ENCODE measurements at regions of chr13 and their contacts with region 1.

Region 1: GRCh38 chr13:85828149-85828548 is 28.9 kb upstream of the SLITRK6 start:
- DNase-seq: no peak
- ATAC-seq: peak in 2 of 4 donors; percentile 36 to 47
- H3K4me3 ChIP-seq: no peak overlapping the region
- H3K27ac ChIP-seq: no peak overlapping the region
- H3K4me1 ChIP-seq: no peaks in the 10 kb centered on the region
- H3K27me3 ChIP-seq: peaks cover 0 to 6% (median 0%) of the 10 kb centered on the region in 4 donors
- CTCF ChIP-seq: peak; percentile 26 to 58 (median 40)

Region 2: DNA sequence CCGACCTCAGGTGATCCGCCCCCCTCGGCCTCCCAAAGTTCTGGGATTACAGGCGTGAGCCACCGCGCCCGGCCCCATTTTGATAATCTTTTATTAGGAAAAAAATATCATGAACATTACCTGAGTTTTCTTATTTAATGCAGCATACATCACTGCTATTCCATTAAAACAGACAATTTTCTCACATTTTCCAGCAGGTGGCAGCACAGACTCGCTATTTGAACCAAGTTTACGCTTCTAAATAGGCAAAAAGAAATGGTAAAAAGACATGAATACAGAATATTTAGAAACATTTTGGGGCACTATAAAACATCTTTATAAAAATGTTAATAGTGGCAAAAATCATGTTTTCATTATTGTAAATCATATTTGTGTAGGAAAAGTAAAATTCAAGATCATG is 932.0 kb before region 1 on chr13:
- intact Hi-C with region 1: loop called in 1 of 3 experiments (anchors 10 kb)
- DNase-seq: peak in 1 of 6 donors; percentile 38
- ATAC-seq: peak in 3 of 4 donors; percentile 46 to 69 (median 48)
- H3K4me3 ChIP-seq: no peak overlapping the region
- H3K27ac ChIP-seq: no peak overlapping the region
- H3K4me1 ChIP-seq: no peaks in the 10 kb centered on the region
- H3K27me3 ChIP-seq: no peaks in the 10 kb centered on the region
- CTCF ChIP-seq: peak; percentile 11 to 53 (median 26)

Region 3: DNA sequence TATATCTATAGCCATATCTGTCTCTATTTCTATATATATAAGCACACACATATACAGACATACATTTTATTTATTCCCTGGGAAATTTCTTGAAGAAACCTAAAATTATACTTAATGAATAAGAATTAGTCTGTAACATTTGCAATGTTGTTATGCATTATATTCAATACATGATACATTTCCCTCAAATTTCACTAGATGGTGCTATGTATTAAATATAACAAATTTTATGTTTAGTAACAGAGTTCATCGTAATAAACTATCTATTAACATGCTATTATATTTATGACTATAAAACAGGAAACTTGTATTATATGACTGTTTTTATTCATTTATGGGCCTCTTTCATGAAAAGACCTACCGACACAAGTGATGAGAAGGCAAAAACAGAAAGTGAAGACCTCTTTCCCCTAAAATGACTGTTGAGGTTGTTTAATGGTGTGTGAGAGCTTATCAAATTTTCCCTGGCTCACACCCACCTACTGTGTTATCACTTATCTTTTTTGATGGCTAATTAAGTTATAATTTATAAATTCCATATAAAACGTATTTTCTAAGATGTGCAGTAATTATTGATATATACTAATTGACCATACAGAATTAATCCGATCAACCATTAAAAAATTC is 910.8 kb before region 1 on chr13:
- intact Hi-C with region 1: loop called in 1 of 3 experiments (anchors 10 kb)
- DNase-seq: no peak
- ATAC-seq: peak in 3 of 4 donors; percentile 47 to 67 (median 51)
- H3K4me3 ChIP-seq: no peak overlapping the region
- H3K27ac ChIP-seq: no peak overlapping the region
- H3K4me1 ChIP-seq: peaks cover 0 to 2% (median 0%) of the 10 kb centered on the region in 3 donors
- H3K27me3 ChIP-seq: no peaks in the 10 kb centered on the region
- CTCF ChIP-seq: peak in 1 of 4 donors; percentile 18

Region 4: DNA sequence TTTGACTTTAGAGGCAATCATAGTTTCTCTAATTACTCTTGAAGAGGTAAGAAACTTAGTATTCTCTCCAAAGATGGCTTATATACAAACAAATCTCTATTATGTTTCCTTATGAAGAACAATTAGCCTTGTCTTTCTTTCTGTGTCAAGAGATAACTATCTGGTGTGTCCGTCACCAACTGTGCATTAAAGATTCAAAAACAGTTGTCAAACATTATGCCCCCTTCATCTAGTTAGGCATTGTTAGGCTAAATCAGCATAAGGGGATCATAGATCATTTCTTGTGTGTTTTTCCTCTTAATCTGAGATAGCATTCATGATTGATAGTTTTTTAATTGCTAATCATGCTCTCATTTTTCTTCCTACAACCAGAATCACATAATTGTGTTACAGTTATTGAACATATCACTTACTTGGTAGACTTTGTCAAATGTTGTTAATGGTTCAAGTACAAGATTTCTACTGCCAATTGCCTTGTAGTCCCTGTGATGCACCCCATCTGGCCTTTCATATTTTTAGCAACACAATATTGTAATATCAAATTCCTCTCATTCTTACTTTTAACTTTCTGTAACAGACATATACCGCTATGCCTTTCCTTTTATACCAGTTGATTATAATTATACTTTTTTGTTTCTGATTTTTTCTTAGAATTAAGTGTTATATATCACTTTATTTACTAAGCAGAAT is 641.6 kb before region 1 on chr13:
- intact Hi-C with region 1: no loop called
- DNase-seq: no peak
- ATAC-seq: no peak
- H3K4me3 ChIP-seq: no peak overlapping the region
- H3K27ac ChIP-seq: no peak overlapping the region
- H3K4me1 ChIP-seq: no peaks in the 10 kb centered on the region
- H3K27me3 ChIP-seq: no peaks in the 10 kb centered on the region
- CTCF ChIP-seq: no peak

Measured in pancreas (tissue), 10 donors.